ENCODE measurements at regions of chr10 and their contacts with region 1.

Region 1: DNA sequence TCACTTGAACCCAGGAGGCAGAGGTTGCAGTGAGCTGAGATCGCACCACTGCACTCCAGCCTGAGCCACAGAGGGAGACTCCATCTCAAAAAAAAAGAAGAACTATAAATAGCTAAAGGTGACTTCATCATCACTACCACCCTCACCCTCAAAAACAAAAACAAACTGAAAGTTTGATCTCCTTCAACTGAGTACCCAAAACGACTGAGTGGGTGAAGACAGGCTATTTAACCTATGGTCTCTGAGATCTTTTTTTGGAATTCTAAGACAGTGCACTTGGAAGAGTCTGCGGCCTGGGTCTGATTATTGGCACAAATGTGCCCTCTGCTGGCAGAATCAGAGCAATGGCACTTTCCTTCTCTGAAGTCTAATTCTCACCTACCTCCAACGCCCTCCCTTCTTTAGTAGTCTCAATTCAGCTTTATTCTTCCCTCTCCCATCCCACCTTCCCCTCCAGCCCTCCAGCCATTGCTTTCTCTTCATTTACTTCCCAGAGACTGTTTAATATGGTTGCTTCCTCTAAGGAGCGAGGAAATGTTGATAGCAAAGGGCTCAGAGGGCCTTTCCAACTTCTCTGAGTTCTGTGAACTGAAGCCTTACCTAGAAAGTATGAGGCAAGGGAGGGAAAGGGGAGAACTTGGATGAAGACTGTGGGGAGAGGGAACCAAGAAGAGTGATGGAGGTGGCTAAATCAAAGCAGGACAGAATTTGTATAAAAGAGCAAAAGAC is 2.9 kb upstream of the MYOZ1 start:
- DNase-seq: peak; percentile 78
- H3K4me3 ChIP-seq: no peak overlapping the region
- H3K27ac ChIP-seq: no peak overlapping the region
- H3K4me1 ChIP-seq: peaks cover 0 to 20% (median 14%) of the 10 kb centered on the region in 4 donors
- H3K27me3 ChIP-seq: no peaks in the 10 kb centered on the region
- CTCF ChIP-seq: peak; percentile 87 to 96 (median 94)
- EP300 ChIP-seq: no peak
- POLR2A ChIP-seq: no peak

Region 2: DNA sequence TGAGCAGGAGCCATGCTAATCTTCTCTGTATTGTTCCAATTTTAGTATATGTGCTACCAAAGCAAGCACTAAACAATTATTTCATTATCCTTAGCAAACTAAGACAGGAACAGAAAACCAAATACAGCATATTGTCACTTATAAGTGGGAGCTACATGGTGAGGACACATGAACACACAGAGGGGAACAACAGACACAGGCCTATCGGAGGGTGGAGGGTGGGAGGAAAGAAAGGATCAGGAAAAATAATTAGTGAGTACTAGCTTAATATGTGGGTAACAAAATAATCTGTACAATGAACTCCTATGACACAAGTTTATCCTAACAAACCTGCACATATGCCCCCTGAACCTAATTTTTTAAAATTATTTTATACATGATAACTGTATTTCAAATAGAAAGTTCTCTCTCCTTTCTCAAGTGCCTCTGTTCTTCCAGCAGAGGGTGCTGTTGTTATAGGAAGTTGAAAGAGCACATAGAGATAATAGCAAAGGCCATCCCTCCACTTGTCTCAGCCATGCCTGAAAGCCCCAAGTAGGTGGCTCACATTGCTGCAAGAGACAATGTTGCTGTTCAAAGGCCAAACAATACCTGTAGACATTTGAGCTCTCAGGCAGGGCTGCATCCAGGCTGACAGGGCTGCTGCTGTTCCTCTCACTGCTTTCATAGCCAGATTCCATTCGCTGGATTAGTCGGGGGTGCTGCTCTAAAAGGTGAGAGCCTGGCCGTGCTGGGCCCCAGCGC is 114.9 kb before region 1 on chr10:
- intact Hi-C with region 1: loop called (anchors 1 kb)
- DNase-seq: peak; percentile 67
- H3K4me3 ChIP-seq: no peak overlapping the region
- H3K27ac ChIP-seq: peak overlapping the region in 1 of 4 donors; percentile 4
- H3K4me1 ChIP-seq: no peaks in the 10 kb centered on the region
- H3K27me3 ChIP-seq: no peaks in the 10 kb centered on the region
- CTCF ChIP-seq: peak; percentile 57 to 85 (median 80)
- EP300 ChIP-seq: no peak
- POLR2A ChIP-seq: no peak

Region 3: GRCh38 chr10:75210282-75211006 is 1566.3 kb after region 1 on chr10 and contains the start of gene VDAC2:
- intact Hi-C with region 1: no loop called
- DNase-seq: peak; percentile 95
- H3K4me3 ChIP-seq: peak within 1 kb of the TSS; percentile 70 to 96 (median 76)
- H3K27ac ChIP-seq: peak within 1 kb of the TSS; percentile 99 to 100 (median 100)
- H3K4me1 ChIP-seq: peaks cover 0 to 64% (median 52%) of the 10 kb centered on the region in 4 donors
- H3K27me3 ChIP-seq: no peaks in the 10 kb centered on the region
- CTCF ChIP-seq: no peak
- EP300 ChIP-seq: no peak
- POLR2A ChIP-seq: peak; percentile 68 to 83
- total RNA-seq, gene VDAC2: 205 to 253 (median 232) TPM

Measured in sigmoid colon (tissue), 7 donors.